B cell (primary cell): ENCODE measurements at regions of chr2 and their contacts with region 1.

Region 1: GRCh38 chr2:200471324-200471848 is 38.5 kb downstream of the KCTD18 start:
- DNase-seq: peak; percentile 63
- ATAC-seq: peak; percentile 48
- H3K4me3 ChIP-seq: no peak overlapping the region
- H3K4me3 Mint-ChIP-seq: no peak overlapping the region
- H3K27ac ChIP-seq: no peak overlapping the region
- H3K27ac Mint-ChIP-seq: peak overlapping the region; percentile 4
- H3K4me1 ChIP-seq: peaks cover 4 to 8% of the 10 kb centered on the region in 2 donors
- H3K4me1 Mint-ChIP-seq: peaks cover 20% of the 10 kb centered on the region
- H3K27me3 ChIP-seq: no peaks in the 10 kb centered on the region
- H3K27me3 Mint-ChIP-seq: no peaks in the 10 kb centered on the region
- CTCF ChIP-seq: peak; percentile 60

Region 2: GRCh38 chr2:199973703-199974102 is 497.7 kb before region 1 on chr2:
- CTCF ChIA-PET with region 1: interaction called, 35 read pairs
- POLR2A ChIA-PET with region 1: no interaction called
- intact Hi-C with region 1: no loop called
- DNase-seq: no peak
- ATAC-seq: no peak
- H3K4me3 ChIP-seq: no peak overlapping the region
- H3K4me3 Mint-ChIP-seq: no peak overlapping the region
- H3K27ac ChIP-seq: no peak overlapping the region
- H3K27ac Mint-ChIP-seq: no peak overlapping the region
- H3K4me1 ChIP-seq: no peaks in the 10 kb centered on the region
- H3K4me1 Mint-ChIP-seq: no peaks in the 10 kb centered on the region
- H3K27me3 ChIP-seq: no peaks in the 10 kb centered on the region
- H3K27me3 Mint-ChIP-seq: no peaks in the 10 kb centered on the region
- CTCF ChIP-seq: no peak

Region 3: DNA sequence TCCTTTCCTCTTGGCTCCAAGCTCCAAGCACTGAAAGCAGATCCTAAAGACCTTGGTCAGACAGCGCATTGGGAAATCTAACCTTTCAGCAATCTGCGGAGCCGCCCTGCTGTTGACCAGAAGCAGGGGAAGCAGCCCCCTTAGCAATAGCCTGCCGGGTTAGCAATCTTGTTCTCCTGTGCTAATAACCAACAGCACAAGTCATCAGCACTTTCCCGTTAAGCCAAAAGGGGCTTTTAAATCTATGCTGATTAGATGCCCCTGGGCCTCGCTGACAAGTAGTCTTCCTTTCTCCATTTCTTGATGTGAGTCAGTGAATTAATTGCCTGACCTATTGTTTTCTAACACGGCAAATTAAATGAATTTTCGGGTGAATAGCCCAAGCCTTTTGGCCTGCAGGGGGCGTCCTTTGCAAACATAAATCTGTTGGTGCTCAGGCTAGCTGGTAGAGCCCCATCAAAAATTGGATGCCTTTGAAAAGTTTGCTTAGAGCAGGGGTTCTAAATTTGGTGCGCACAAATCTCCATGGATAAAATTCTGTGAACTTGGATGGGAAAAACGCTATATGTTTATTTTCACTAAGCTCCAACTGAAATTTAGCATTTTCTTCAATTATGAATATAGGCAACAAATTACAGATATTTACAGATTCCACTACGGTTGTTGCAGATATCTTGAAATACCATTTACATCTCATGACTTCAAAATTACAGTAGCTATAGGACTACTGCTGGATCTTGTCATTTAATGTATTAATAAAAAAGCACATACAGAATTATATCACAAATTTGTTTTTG is 491.4 kb before region 1 on chr2:
- CTCF ChIA-PET with region 1: interaction called, 35 read pairs
- POLR2A ChIA-PET with region 1: no interaction called
- intact Hi-C with region 1: loop called (anchors 1 kb)
- DNase-seq: peak; percentile 76
- ATAC-seq: no peak
- H3K4me3 ChIP-seq: no peak overlapping the region
- H3K4me3 Mint-ChIP-seq: no peak overlapping the region
- H3K27ac ChIP-seq: no peak overlapping the region
- H3K27ac Mint-ChIP-seq: no peak overlapping the region
- H3K4me1 ChIP-seq: no peaks in the 10 kb centered on the region
- H3K4me1 Mint-ChIP-seq: peaks cover 2% of the 10 kb centered on the region
- H3K27me3 ChIP-seq: peaks cover 0 to 2% (median 0%) of the 10 kb centered on the region in 4 experiments
- H3K27me3 Mint-ChIP-seq: no peaks in the 10 kb centered on the region
- CTCF ChIP-seq: peak; percentile 86